Endothelial cell of umbilical vein (primary cell): ENCODE measurements at regions of chr17 and their contacts with region 1.

Region 1: DNA sequence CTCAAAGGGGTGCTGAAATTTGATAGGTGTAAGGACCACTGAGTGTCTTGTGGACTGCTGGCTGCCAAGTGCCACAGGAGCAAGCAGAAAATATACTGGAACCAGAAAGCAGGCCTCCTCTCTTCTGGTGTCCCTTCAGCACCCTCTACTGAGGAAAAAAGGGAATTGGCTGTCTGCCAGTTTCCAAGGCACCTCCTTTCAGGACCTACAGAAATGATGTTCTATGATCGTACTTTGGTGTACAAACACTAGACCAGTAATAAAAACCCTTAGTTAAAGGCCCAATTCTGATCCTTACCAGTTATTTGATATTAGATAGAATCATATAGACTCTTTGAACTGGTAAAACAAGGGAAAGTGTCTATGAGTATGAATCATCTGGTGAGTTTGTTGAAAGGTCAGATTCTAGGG is 35.8 kb upstream of the BCAS3 start:
- DNase-seq: peak; percentile 87
- H3K4me3 ChIP-seq: no peak overlapping the region
- H3K27ac ChIP-seq: no peak overlapping the region
- H3K4me1 ChIP-seq: peaks cover 3% of the 10 kb centered on the region
- H3K27me3 ChIP-seq: no peaks in the 10 kb centered on the region
- CTCF ChIP-seq: peak; percentile 35 to 46
- POLR2A ChIP-seq: no peak

Region 2: GRCh38 chr17:60435244-60436167 is 206.3 kb before region 1 on chr17:
- CTCF ChIA-PET with region 1: interaction called, 6 read pairs
- POLR2A ChIA-PET with region 1: no interaction called
- dilution Hi-C with region 1: no loop called
- intact Hi-C with region 1: loop called (anchors 1 kb)
- DNase-seq: peak; percentile 75
- H3K4me3 ChIP-seq: no peak overlapping the region
- H3K27ac ChIP-seq: no peak overlapping the region
- H3K4me1 ChIP-seq: peaks cover 2% of the 10 kb centered on the region
- H3K27me3 ChIP-seq: no peaks in the 10 kb centered on the region
- CTCF ChIP-seq: peak; percentile 75 to 77
- POLR2A ChIP-seq: no peak

Region 3: GRCh38 chr17:60525685-60526514 is 115.9 kb before region 1 on chr17 and contains the start of gene APPBP2:
- CTCF ChIA-PET with region 1: interaction called, 4 read pairs
- POLR2A ChIA-PET with region 1: no interaction called
- dilution Hi-C with region 1: no loop called
- intact Hi-C with region 1: loop called (anchors 1 kb)
- DNase-seq: peak; percentile 90
- H3K4me3 ChIP-seq: peak within 1 kb of the TSS; percentile 71 to 94 (median 91)
- H3K27ac ChIP-seq: peak within 1 kb of the TSS; percentile 86
- H3K4me1 ChIP-seq: peaks cover 11% of the 10 kb centered on the region
- H3K27me3 ChIP-seq: no peaks in the 10 kb centered on the region
- CTCF ChIP-seq: no peak
- POLR2A ChIP-seq: peak; percentile 97
- total RNA-seq, gene APPBP2: 42.0 and 49.1 TPM in 2 replicates

Region 4: GRCh38 chr17:60577147-60577915 is 64.5 kb before region 1 on chr17:
- CTCF ChIA-PET with region 1: interaction called, 11 read pairs
- POLR2A ChIA-PET with region 1: no interaction called
- dilution Hi-C with region 1: no loop called
- intact Hi-C with region 1: loop called (anchors 1 kb)
- DNase-seq: peak; percentile 67
- H3K4me3 ChIP-seq: peak overlapping the region in 2 of 3 experiments; percentile 5 to 10
- H3K27ac ChIP-seq: peak overlapping the region; percentile 3
- H3K4me1 ChIP-seq: peaks cover 21% of the 10 kb centered on the region
- H3K27me3 ChIP-seq: no peaks in the 10 kb centered on the region
- CTCF ChIP-seq: no peak
- POLR2A ChIP-seq: no peak

Region 5: GRCh38 chr17:60630352-60630751 is 11.5 kb before region 1 on chr17:
- CTCF ChIA-PET with region 1: interaction called, 14 read pairs
- POLR2A ChIA-PET with region 1: no interaction called
- dilution Hi-C with region 1: no loop called
- intact Hi-C with region 1: no loop called
- DNase-seq: peak; percentile 89
- H3K4me3 ChIP-seq: no peak overlapping the region
- H3K27ac ChIP-seq: peak overlapping the region; percentile 34
- H3K4me1 ChIP-seq: peaks cover 8% of the 10 kb centered on the region
- H3K27me3 ChIP-seq: no peaks in the 10 kb centered on the region
- CTCF ChIP-seq: no peak
- POLR2A ChIP-seq: no peak